ENCODE measurements at regions of chr1 and their contacts with region 1.

Region 1: DNA sequence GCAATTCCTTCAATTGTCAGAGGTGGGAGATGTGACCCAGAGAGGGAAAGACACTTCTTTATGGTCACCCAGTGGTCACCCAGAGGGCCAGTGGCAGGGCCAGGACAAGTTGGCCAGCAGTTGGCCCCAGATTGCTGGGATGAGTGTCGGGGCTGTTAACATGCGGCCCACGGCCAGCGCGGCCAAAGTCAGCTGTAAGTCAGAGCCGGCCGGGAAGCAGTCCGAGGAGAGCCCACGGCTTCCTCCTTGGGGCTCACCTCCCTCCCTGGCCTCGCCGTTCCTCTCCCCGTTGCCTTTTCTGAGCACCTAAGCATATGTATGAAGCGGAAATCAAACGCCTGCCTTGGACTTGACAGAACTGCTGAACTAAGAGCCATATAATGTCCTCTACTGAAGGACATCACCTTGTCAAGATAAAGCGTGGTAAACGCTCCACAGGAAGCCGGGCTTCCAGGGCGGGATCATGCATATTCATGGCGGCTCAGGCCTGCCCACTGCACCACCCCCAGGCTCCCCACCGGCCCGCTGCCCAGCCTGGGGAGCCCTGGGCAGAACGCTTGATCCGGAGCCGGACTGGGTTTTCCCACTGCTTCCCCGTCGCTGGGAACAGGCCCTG is 245.4 kb upstream of the POU3F1 start:
- DNase-seq: no peak
- H3K4me3 ChIP-seq: no peak overlapping the region
- H3K27ac ChIP-seq: no peak overlapping the region
- H3K4me1 ChIP-seq: peaks cover under 1% of the 10 kb centered on the region
- H3K27me3 ChIP-seq: no peaks in the 10 kb centered on the region
- CTCF ChIP-seq: no peak

Region 2: DNA sequence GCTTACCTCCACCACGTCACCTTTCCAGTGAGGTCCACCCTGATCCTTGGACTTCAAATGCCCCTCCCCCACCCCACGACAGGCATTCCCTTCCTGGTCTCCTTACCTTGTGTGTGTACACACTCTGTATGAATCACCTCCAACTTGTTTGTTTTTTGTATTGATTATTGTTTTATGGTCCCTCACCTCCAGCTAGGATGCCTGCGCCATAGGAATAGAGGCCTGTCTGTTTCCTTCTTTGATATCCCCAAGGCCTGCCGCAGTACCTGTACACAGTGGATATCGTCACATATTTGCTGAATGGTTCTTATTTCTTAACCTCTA is 25.9 kb before region 1 on chr1:
- CTCF ChIA-PET with region 1: no interaction called
- POLR2A ChIA-PET with region 1: no interaction called
- intact Hi-C with region 1: loop called (anchors 1 kb)
- DNase-seq: no peak
- H3K4me3 ChIP-seq: no peak overlapping the region
- H3K27ac ChIP-seq: no peak overlapping the region
- H3K4me1 ChIP-seq: no peaks in the 10 kb centered on the region
- H3K27me3 ChIP-seq: no peaks in the 10 kb centered on the region
- CTCF ChIP-seq: no peak

Region 3: GRCh38 chr1:38308780-38309179 is 16.8 kb after region 1 on chr1:
- CTCF ChIA-PET with region 1: no interaction called
- POLR2A ChIA-PET with region 1: no interaction called
- intact Hi-C with region 1: loop called (anchors 1 kb)
- DNase-seq: no peak
- H3K4me3 ChIP-seq: no peak overlapping the region
- H3K27ac ChIP-seq: no peak overlapping the region
- H3K4me1 ChIP-seq: no peaks in the 10 kb centered on the region
- H3K27me3 ChIP-seq: no peaks in the 10 kb centered on the region
- CTCF ChIP-seq: no peak